GM10248 (cell line): ENCODE measurements at regions of chr11 and their contacts with region 1.

Region 1: DNA sequence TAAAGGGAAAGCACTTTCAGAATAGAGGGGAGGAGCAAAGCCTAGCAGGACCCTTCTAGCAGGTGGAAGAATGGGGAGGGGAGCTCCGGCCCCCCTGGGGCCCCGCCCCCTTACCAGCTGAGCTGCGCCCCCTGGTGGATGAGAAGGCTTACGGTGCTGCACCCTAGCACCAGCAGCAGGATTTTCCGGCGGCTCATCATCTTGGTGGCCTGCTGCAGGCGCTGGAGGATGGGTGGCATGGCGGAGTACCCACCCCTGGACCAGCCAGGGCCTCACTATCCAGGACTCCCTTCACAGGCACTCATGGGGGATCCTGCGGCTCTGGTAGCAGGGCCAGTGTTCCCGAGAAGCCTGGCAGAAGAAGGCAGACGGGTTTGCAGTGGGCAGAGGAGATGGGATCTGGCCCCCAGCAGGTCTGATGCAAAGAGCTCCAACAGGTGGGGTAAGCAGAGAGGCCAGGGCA is 3.8 kb downstream of the GAL3ST3 start:
- DNase-seq: peak; percentile 91
- CTCF ChIP-seq: peak; percentile 92

Region 2: DNA sequence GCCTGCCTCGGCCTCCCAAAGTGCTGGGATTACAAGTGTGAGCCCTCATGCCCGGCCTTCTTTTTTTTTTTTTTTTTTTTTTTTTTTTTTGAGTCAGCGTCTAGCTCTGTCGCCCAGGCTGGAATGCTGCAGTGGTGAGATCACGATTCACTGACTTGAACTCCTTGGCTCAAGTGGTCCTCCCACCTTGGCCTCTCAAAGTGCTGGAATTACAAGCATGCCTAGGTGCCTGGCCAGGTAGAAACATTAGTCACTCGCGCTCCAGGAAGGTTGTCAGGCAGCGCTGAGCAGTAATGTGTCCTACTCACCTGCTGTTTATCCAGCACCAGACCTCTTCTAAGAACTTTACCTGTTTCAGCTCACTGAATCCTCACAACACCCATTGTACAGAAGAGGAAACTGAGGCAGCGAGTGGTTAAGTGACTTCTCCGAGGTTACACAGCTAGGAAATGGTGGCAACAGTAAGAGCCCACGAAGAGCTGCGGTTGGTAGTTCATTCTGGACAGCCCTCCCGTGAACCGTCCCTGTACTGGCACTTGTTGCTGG is 33.9 kb before region 1 on chr11:
- CTCF ChIA-PET with region 1: interaction called, 23 read pairs
- POLR2A ChIA-PET with region 1: interaction called, 5 read pairs
- DNase-seq: no peak
- CTCF ChIP-seq: no peak

Region 3: GRCh38 chr11:66059966-66060680 is 14.9 kb after region 1 on chr11:
- CTCF ChIA-PET with region 1: interaction called, 143 read pairs
- POLR2A ChIA-PET with region 1: interaction called, 3 read pairs
- DNase-seq: no peak
- CTCF ChIP-seq: no peak